Ovary (tissue), 10 donors: ENCODE measurements at regions of chr11 and their contacts with region 1.

Region 1: GRCh38 chr11:68939638-68940555 is 36.2 kb downstream of the IGHMBP2 start:
- DNase-seq: no peak
- H3K4me3 ChIP-seq: no peak overlapping the region
- H3K27ac ChIP-seq: no peak overlapping the region
- H3K4me1 ChIP-seq: no peaks in the 10 kb centered on the region
- H3K27me3 ChIP-seq: no peaks in the 10 kb centered on the region
- CTCF ChIP-seq: no peak
- EP300 ChIP-seq: no peak
- POLR2A ChIP-seq: no peak

Region 2: GRCh38 chr11:68903288-68904247 is 36.3 kb before region 1 on chr11 and contains the starts of genes IGHMBP2 and MRPL21:
- intact Hi-C with region 1: no loop called
- DNase-seq: peak; percentile 80 to 92 (median 85)
- H3K4me3 ChIP-seq: peak within 1 kb of the TSS; percentile 88
- H3K27ac ChIP-seq: peak within 1 kb of the TSS; percentile 58 to 85
- H3K4me1 ChIP-seq: peaks cover 9% of the 10 kb centered on the region
- H3K27me3 ChIP-seq: no peaks in the 10 kb centered on the region
- CTCF ChIP-seq: no peak
- EP300 ChIP-seq: no peak
- POLR2A ChIP-seq: peak; percentile 72
- total RNA-seq, gene IGHMBP2: 8.3 to 18.9 (median 16.2) TPM
- total RNA-seq, gene MRPL21: 40.3 to 70.7 (median 51.9) TPM

Region 3: GRCh38 chr11:69620683-69621290 is 680.9 kb after region 1 on chr11:
- intact Hi-C with region 1: loop called in 1 of 4 experiments (anchors 10 kb)
- DNase-seq: no peak
- H3K4me3 ChIP-seq: no peak overlapping the region
- H3K27ac ChIP-seq: no peak overlapping the region
- H3K4me1 ChIP-seq: no peaks in the 10 kb centered on the region
- H3K27me3 ChIP-seq: no peaks in the 10 kb centered on the region
- CTCF ChIP-seq: no peak
- EP300 ChIP-seq: no peak
- POLR2A ChIP-seq: no peak